IMR-90 (cell line): ENCODE measurements at regions of chr18 and their contacts with region 1.

Region 1: DNA sequence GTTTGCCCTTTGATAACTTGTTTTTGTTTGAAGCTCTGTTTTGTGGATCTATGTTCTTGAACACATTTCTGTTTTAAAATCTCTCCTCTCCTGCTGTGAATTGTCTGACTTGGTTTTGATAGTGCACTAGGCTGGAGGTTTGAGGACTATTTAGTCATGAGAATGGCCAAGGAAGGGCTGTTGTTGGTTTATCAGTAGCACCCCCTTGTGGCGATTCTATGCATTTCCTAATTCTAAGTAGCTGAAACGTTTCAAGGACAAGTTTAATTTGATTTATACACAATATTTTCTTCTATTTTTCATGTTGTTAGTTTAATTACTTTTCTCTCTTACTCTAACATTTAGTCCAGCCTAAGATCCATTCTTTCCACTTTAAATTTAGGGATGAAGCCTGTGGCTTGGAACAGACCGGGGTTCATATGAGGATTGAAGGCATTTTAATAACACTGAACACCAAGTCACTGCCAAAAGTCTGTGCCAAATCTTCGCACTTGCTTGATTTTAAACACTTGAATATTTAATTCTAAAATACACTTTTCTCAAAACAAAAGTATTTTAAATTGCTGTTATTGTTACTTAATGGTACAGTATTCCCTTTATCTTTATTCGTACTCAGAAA is 166.0 kb downstream of the SOCS6 start:
- DNase-seq: peak; percentile 79
- ATAC-seq: peak; percentile 86
- H3K4me3 ChIP-seq: no peak overlapping the region
- H3K27ac ChIP-seq: no peak overlapping the region
- H3K4me1 ChIP-seq: peaks cover 2% of the 10 kb centered on the region; the same call in 1 of the 2 replicates
- H3K27me3 ChIP-seq: no peaks in the 10 kb centered on the region
- CTCF ChIP-seq: peak; percentile 76
- POLR2A ChIP-seq: no peak
- RAD21 ChIP-seq: peak; percentile 77

Region 2: DNA sequence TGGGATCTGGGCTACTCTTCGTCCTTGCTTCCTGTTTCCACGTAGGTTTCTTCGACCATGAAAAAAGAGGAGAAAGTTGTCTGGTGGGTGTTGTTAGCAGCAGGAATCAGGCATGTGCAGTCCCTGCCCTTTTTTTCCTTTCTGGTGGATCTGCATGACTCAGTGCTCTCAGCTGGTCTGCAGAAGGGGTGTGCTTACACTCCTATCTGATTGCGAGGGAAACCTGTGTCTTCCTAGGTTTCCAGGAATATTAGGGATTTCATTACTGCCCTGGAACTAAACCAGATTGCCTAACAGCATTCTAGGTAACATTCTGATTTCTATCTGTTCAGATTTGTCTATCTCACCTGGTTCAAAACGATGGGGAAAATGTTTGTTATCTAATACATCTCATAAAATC is 1482.6 kb before region 1 on chr18:
- CTCF ChIA-PET with region 1: no interaction called
- POLR2A ChIA-PET with region 1: no interaction called
- dilution Hi-C with region 1: no loop called
- in situ Hi-C with region 1: no loop called
- intact Hi-C with region 1: no loop called
- DNase-seq: no peak
- ATAC-seq: no peak
- H3K4me3 ChIP-seq: no peak overlapping the region
- H3K27ac ChIP-seq: no peak overlapping the region
- H3K4me1 ChIP-seq: no peaks in the 10 kb centered on the region
- H3K27me3 ChIP-seq: no peaks in the 10 kb centered on the region
- CTCF ChIP-seq: no peak
- POLR2A ChIP-seq: no peak
- RAD21 ChIP-seq: no peak

Region 3: DNA sequence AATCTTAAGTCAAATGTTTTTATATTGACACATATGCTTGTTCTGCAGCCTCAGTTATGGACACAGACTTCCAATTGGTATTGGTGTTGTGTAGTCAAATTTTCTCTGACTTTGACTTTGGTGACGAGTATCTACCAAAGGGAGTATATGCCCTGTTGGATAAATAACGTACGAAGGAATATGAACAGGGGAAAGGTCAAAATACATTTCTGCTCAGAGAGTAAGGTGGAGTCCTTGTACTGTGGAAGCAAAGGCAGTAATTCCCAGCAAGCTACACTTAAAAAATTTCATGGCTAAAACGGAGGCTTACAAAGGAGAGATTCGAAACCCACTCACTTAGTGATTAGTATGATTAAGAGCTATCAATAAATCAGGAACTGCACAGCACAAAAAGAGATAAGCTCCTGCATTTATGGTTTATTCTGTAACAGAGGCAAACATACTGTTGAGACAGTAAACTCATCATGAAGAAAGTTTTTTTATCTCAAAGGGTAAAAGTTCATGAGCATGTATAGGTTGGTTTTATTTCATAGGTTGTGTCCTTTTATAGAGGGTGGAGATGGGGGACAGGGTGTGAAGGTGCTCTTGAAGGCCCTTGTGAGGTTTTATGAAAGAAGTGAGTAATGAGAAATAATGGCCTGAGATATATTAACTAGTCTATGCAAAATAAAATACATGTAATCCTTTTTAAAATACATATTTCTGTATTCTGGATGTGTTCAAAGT is 649.9 kb before region 1 on chr18:
- CTCF ChIA-PET with region 1: no interaction called
- POLR2A ChIA-PET with region 1: no interaction called
- dilution Hi-C with region 1: no loop called
- in situ Hi-C with region 1: no loop called
- intact Hi-C with region 1: loop called (anchors 10 kb)
- DNase-seq: no peak
- ATAC-seq: no peak
- H3K4me3 ChIP-seq: no peak overlapping the region
- H3K27ac ChIP-seq: no peak overlapping the region
- H3K4me1 ChIP-seq: no peaks in the 10 kb centered on the region
- H3K27me3 ChIP-seq: no peaks in the 10 kb centered on the region
- CTCF ChIP-seq: no peak
- POLR2A ChIP-seq: no peak
- RAD21 ChIP-seq: no peak

Region 4: GRCh38 chr18:70089858-70090257 is 365.0 kb before region 1 on chr18:
- CTCF ChIA-PET with region 1: no interaction called
- POLR2A ChIA-PET with region 1: no interaction called
- dilution Hi-C with region 1: no loop called
- in situ Hi-C with region 1: loop called (anchors 10 kb)
- intact Hi-C with region 1: loop called (anchors 5 kb)
- DNase-seq: no peak
- ATAC-seq: no peak
- H3K4me3 ChIP-seq: no peak overlapping the region
- H3K27ac ChIP-seq: no peak overlapping the region
- H3K4me1 ChIP-seq: peaks cover 1% of the 10 kb centered on the region; the same call in 1 of the 2 replicates
- H3K27me3 ChIP-seq: no peaks in the 10 kb centered on the region
- CTCF ChIP-seq: no peak
- POLR2A ChIP-seq: no peak
- RAD21 ChIP-seq: no peak

Region 5: DNA sequence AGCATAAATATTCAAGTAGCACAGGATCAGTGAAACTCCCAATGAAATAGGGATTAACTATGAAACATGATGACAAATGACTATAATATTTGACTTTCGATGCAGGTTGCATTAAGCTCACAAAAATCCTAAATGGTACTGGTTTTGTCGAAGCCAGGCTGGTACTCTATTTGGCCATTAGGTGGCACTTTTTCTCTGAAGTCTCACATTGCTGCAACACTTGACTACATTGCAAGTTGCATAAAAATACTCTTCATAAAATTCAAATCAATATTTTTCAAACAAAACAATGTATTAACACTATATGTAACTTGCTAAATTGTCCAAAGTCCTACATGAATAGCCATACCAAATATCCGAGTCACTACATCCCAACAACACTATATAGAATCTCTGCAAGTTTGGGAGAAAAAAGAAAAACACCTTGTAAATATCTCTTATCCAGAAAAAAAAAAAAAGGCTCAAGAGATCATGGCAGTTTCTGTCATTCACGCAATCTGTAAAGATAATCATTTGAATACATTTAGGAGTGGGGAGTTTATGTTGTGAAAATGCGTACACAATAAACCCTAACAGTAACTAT is 258.9 kb before region 1 on chr18:
- CTCF ChIA-PET with region 1: interaction called, 6 read pairs
- POLR2A ChIA-PET with region 1: no interaction called
- dilution Hi-C with region 1: no loop called
- in situ Hi-C with region 1: no loop called
- intact Hi-C with region 1: loop called (anchors 1 kb)
- DNase-seq: peak; percentile 70
- ATAC-seq: peak; percentile 72
- H3K4me3 ChIP-seq: no peak overlapping the region
- H3K27ac ChIP-seq: no peak overlapping the region
- H3K4me1 ChIP-seq: no peaks in the 10 kb centered on the region
- H3K27me3 ChIP-seq: no peaks in the 10 kb centered on the region
- CTCF ChIP-seq: peak; percentile 82
- POLR2A ChIP-seq: no peak
- RAD21 ChIP-seq: peak; percentile 87

Region 6: DNA sequence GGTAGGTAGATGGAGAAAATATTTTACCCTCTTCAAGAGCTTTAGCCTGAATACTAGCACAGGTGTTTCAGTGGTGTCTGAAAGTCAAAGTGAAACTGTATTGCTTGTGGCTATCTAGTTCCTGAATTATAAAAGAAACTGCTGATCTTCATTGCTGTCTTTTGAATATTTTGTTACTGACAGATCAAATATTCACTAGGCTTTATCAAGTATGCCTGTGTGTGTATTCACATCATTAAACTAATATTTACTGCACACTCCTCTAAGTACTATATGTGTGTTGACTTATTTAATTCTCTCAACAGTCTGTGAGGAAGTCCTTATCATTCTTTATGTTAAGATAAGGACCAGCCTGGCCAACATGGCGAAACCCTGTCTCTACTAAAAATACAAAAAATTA is 26.4 kb before region 1 on chr18:
- CTCF ChIA-PET with region 1: interaction called, 10 read pairs
- POLR2A ChIA-PET with region 1: no interaction called
- dilution Hi-C with region 1: no loop called
- in situ Hi-C with region 1: no loop called
- intact Hi-C with region 1: no loop called
- DNase-seq: no peak
- ATAC-seq: no peak
- H3K4me3 ChIP-seq: no peak overlapping the region
- H3K27ac ChIP-seq: no peak overlapping the region
- H3K4me1 ChIP-seq: peaks cover 10% of the 10 kb centered on the region
- H3K27me3 ChIP-seq: no peaks in the 10 kb centered on the region
- CTCF ChIP-seq: no peak
- POLR2A ChIP-seq: no peak
- RAD21 ChIP-seq: no peak